ENCODE measurements at regions of chr13 and their contacts with region 1.

Region 1: DNA sequence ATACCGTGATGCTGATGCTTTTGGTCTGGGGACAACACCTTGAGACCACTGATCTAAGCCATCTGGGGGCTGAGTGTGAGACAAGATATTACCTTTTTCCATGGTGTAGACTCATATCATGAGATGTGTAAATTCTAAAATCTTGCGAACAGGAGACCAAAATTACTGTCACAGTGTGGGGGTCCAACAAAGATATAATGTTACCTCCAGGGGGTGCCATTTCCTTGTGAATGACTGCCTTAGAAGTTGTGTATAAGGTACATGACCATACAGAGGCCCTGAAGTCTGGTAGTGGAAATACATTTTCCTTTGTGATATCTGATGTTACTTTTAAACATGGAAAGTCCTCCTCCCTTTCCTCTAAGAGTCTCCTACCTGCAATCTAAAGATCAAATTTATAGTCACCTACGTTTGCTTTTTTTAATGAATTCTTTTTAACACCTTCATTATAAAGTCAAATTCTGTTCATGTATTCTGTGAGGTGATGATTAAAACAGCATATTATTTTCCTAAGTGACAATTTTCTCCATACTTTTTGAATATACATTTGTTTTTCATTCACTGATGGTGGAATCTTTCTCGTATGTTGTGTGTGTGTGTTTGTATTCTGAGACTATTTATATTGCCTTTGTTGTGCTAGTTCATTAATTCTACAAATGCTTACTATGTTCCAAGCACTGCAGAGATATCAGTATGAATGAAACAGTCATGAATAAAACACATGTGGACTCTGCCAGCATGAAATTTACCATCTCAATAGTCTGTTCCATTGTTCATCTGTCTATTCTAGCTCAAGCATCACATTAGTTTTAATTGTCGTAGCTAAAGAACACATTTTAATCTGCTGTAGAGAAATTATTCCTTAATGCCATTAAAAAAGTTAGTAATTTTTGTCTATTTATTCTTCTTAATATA is 113.7 kb downstream of the RFC3 start:
- DNase-seq: no peak
- H3K4me3 ChIP-seq: no peak overlapping the region
- H3K27ac ChIP-seq: no peak overlapping the region
- H3K4me1 ChIP-seq: no peaks in the 10 kb centered on the region
- H3K27me3 ChIP-seq: no peaks in the 10 kb centered on the region
- CTCF ChIP-seq: peak in 5 of 6 experiments; percentile 34 to 65 (median 44)
- POLR2A ChIP-seq: no peak

Region 2: DNA sequence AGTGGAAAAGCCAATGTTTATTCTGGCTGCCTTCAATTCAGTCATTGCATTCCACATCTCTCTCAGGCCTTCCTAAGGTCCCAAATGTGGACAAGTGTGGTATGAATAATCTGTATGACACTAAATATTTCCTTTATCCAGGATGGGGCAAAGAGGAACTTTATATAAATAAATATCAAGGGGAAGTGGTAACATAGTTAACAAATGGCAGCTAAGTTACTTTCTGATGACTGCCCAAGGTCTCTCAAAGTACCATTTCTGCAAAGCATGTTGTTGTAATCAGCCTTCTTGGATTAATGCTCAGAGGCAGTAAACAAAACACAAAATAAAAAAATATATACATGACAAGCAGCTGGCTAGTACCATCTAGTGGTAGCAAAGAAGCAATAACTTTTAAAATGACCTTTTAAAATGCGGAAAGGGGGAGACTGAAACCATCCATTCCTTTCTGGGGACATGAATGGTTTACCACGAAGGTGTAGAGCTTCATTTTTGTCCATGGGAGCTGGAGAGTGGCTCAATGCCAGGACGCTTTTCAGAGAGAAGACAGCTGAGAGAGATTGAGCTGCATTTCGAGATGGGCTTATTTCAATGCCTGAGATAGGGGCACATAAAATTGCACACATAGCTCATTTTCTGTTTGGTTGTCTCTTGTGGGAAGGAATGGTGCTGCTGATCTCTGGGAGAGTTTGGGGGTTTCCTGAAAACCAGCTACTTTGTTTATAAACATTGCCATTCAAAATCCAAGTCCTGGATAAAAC is 145.5 kb after region 1 on chr13:
- intact Hi-C with region 1: loop called (anchors 10 kb)
- DNase-seq: no peak
- H3K4me3 ChIP-seq: no peak overlapping the region
- H3K27ac ChIP-seq: no peak overlapping the region
- H3K4me1 ChIP-seq: peaks cover 0 to 7% (median 0%) of the 10 kb centered on the region in 3 donors
- H3K27me3 ChIP-seq: no peaks in the 10 kb centered on the region
- CTCF ChIP-seq: peak in 5 of 6 experiments; percentile 38 to 66 (median 44)
- POLR2A ChIP-seq: no peak

Measured in esophagus squamous epithelium (tissue), 5 donors.